SK-N-SH (cell line): ENCODE measurements at regions of chr7 and their contacts with region 1.

Region 1: GRCh38 chr7:142782922-142783900 is 12.4 kb downstream of the PRSS2 start:
- DNase-seq: peak; percentile 90
- H3K4me3 ChIP-seq: peak overlapping the region; percentile 38 to 52
- H3K27ac ChIP-seq: no peak overlapping the region
- H3K4me1 ChIP-seq: no peaks in the 10 kb centered on the region; a peak in 1 of 4 replicates
- H3K27me3 ChIP-seq: 0 out of 2 replicates have a peak, but pooled peaks cover 3% of the 10 kb centered on the region
- CTCF ChIP-seq: peak; percentile 99
- EP300 ChIP-seq: peak in 1 of 2 experiments; percentile 40; a peak in 1 of 4 replicates
- RAD21 ChIP-seq: peak; percentile 100

Region 2: GRCh38 chr7:142459551-142459963 is 323.7 kb before region 1 on chr7:
- CTCF ChIA-PET with region 1: interaction called, 31 read pairs
- POLR2A ChIA-PET with region 1: no interaction called
- DNase-seq: peak; percentile 64
- H3K4me3 ChIP-seq: no peak overlapping the region; a peak in 1 of 4 replicates
- H3K27ac ChIP-seq: no peak overlapping the region
- H3K4me1 ChIP-seq: peaks cover 5 to 10% of the 10 kb centered on the region in 2 experiments; a peak in 2 of 4 replicates
- H3K27me3 ChIP-seq: no peaks in the 10 kb centered on the region
- CTCF ChIP-seq: peak; percentile 93
- EP300 ChIP-seq: no peak
- RAD21 ChIP-seq: peak; percentile 77

Region 3: GRCh38 chr7:142516038-142516501 is 267.1 kb before region 1 on chr7:
- CTCF ChIA-PET with region 1: interaction called, 64 read pairs
- POLR2A ChIA-PET with region 1: no interaction called
- DNase-seq: peak; percentile 69
- H3K4me3 ChIP-seq: peak overlapping the region in 1 of 2 experiments; percentile 20; a peak in 1 of 4 replicates
- H3K27ac ChIP-seq: no peak overlapping the region; a peak in 1 of 4 replicates
- H3K4me1 ChIP-seq: peaks cover 0 to 18% of the 10 kb centered on the region in 2 experiments; a peak in 2 of 4 replicates
- H3K27me3 ChIP-seq: peaks cover 33% of the 10 kb centered on the region
- CTCF ChIP-seq: peak; percentile 96
- EP300 ChIP-seq: no peak
- RAD21 ChIP-seq: peak; percentile 85

Region 4: GRCh38 chr7:142603870-142604448 is 179.3 kb before region 1 on chr7:
- CTCF ChIA-PET with region 1: interaction called, 417 read pairs
- POLR2A ChIA-PET with region 1: no interaction called
- DNase-seq: peak; percentile 81
- H3K4me3 ChIP-seq: peak overlapping the region; percentile 6 to 7; a peak in 2 of 4 replicates
- H3K27ac ChIP-seq: no peak overlapping the region
- H3K4me1 ChIP-seq: peaks cover 0 to 5% of the 10 kb centered on the region in 2 experiments; a peak in 2 of 4 replicates
- H3K27me3 ChIP-seq: no peaks in the 10 kb centered on the region
- CTCF ChIP-seq: peak; percentile 99
- EP300 ChIP-seq: no peak
- RAD21 ChIP-seq: peak; percentile 100

Region 5: GRCh38 chr7:142669074-142669654 is 114.0 kb before region 1 on chr7:
- CTCF ChIA-PET with region 1: interaction called, 22 read pairs
- POLR2A ChIA-PET with region 1: no interaction called
- DNase-seq: peak; percentile 12
- H3K4me3 ChIP-seq: no peak overlapping the region
- H3K27ac ChIP-seq: no peak overlapping the region
- H3K4me1 ChIP-seq: no peaks in the 10 kb centered on the region; a peak in 2 of 4 replicates
- H3K27me3 ChIP-seq: no peaks in the 10 kb centered on the region
- CTCF ChIP-seq: peak; percentile 58
- EP300 ChIP-seq: no peak
- RAD21 ChIP-seq: peak; percentile 43; the same call in 1 of the 2 replicates

Region 6: GRCh38 chr7:142739923-142740492 is 43.2 kb before region 1 on chr7:
- CTCF ChIA-PET with region 1: interaction called, 10 read pairs
- POLR2A ChIA-PET with region 1: no interaction called
- DNase-seq: no peak
- H3K4me3 ChIP-seq: no peak overlapping the region
- H3K27ac ChIP-seq: no peak overlapping the region
- H3K4me1 ChIP-seq: no peaks in the 10 kb centered on the region
- H3K27me3 ChIP-seq: 0 out of 2 replicates have a peak, but pooled peaks cover 23% of the 10 kb centered on the region
- CTCF ChIP-seq: peak; percentile 16; the same call in 1 of the 2 replicates
- EP300 ChIP-seq: no peak
- RAD21 ChIP-seq: no peak

Region 7: DNA sequence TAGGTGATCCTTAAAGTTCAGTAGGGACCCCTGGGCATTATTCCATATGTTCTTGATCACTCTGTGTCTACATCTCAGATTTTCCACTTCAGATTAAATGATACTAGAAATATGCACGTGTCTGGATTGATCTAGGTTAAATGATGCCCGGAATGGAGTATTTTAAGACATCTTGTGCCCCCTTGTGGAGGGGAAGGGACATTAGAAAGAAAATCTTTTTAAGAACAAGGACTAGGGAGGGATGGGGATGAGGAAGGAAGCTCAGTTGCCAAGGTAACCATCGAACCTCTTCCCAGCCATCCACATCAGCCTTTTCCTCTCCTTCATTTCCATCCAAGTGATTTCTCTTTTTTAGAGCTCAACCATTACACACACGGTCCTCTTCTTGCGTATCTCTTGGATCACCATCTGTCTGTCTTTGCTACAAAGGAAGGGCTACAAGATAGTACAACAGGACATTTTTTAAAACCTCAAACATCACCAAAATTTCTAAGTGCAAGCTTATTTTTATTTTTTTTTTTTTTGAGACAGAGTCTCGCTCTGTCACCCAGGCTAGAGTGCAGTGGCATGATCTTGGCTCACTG is 28.0 kb after region 1 on chr7:
- CTCF ChIA-PET with region 1: interaction called, 163 read pairs
- POLR2A ChIA-PET with region 1: no interaction called
- DNase-seq: peak; percentile 59
- H3K4me3 ChIP-seq: no peak overlapping the region; a peak in 1 of 4 replicates
- H3K27ac ChIP-seq: no peak overlapping the region
- H3K4me1 ChIP-seq: peaks cover 27 to 33% of the 10 kb centered on the region in 2 experiments
- H3K27me3 ChIP-seq: peaks cover 10% of the 10 kb centered on the region; the same call in 1 of the 2 replicates
- CTCF ChIP-seq: peak; percentile 89
- EP300 ChIP-seq: no peak
- RAD21 ChIP-seq: peak; percentile 76

Region 8: DNA sequence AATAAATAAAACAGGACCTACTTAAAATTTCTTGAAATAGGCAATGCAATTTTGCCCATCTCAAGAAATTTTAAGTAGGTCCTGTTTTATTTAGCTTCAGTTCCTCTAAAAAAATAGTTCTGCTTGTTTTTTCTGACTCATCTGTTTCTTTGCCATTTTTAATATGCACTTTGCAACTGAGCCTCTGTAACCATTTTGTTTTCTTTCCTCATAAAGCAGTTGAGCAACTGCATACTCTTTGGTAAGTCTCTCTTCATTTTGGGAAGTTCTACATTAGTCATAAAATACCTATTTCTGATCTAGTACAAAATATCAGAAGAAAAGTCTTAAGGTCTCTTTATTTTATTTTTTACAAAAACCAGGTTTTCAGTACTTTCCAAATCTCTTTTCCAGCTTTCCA is 456.6 kb after region 1 on chr7:
- CTCF ChIA-PET with region 1: no interaction called
- POLR2A ChIA-PET with region 1: no interaction called
- DNase-seq: no peak
- H3K4me3 ChIP-seq: peak overlapping the region; percentile 13 to 18; a peak in 2 of 4 replicates
- H3K27ac ChIP-seq: peak overlapping the region in 1 of 2 experiments; percentile 42; a peak in 2 of 4 replicates
- H3K4me1 ChIP-seq: peaks cover 0 to 4% of the 10 kb centered on the region in 2 experiments; a peak in 2 of 4 replicates
- H3K27me3 ChIP-seq: no peaks in the 10 kb centered on the region
- CTCF ChIP-seq: no peak
- EP300 ChIP-seq: 0 out of 4 replicates have a peak, but pooled peaks of 1 of the 2 experiments have one; percentile 7
- RAD21 ChIP-seq: no peak